ENCODE measurements at regions of chr3 and their contacts with region 1.

Region 1: DNA sequence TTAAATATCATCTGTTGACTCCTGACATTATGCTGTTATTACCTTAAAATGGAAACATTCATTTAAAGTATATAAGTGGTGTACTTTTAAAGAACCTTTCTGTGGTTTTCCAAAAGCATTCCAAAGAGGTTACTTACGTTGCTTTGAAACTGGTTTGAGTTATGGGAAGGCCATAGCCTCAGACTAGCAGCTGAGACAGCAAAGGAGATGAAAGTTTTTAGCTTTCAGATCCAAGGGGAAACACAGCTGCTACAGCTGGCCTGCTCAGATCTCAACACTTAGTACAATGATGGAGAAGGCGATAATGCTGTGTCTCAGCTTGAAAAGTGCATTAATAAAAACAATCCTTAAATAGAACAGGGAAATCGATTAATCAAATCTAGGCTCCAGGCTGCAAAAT is 921.1 kb downstream of the ROBO1 start:
- DNase-seq: no peak
- ATAC-seq: no peak
- H3K4me3 ChIP-seq: no peak overlapping the region
- H3K27ac ChIP-seq: no peak overlapping the region
- H3K4me1 ChIP-seq: no peaks in the 10 kb centered on the region
- H3K27me3 ChIP-seq: no peaks in the 10 kb centered on the region
- CTCF ChIP-seq: no peak
- EP300 ChIP-seq: no peak
- POLR2A ChIP-seq: no peak
- RAD21 ChIP-seq: no peak

Region 2: DNA sequence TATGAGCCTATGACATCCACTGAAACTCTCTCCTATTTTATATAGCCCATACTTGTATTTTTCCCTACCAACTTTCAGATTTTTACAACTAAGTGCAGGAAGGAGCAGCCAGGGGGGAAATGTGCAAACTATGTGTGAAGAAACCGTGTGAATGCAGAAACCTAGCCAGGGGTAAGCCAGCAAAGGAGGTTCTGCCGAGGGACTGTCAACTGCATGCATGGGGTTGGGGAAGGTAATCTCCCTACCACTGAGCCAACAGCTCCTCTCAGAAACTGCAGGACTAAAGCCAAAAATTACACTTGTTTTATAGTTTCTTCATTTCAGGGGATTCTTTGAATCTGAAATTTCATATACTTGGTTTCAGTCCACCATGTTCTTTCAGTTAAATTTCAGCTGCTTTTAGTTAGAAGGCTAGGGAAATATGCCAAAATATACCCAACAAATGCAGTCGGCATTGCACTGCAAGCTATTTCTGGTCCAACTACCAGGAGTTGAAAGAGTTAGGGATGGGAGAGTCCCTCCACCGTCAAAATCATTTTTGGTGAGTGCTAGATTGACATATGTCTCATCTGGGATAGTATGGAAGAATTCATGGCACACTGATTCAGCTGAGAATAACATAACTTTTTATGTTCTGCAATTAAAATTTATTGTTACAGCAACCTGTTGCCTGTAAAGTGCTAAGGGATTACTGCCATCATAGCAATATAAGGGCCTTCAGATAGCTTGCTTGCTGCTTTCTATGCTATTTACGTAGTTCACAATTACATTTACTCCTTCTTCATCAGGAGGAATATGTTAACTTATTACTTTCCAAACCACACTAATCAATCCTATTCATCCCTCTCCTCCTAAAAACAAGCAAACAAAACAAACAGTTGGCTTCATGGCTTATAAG is 16.8 kb after region 1 on chr3:
- CTCF ChIA-PET with region 1: interaction called, 6 read pairs
- POLR2A ChIA-PET with region 1: interaction called, 3 read pairs
- RAD21 ChIA-PET with region 1: interaction called, 7 read pairs
- SMC1A ChIA-PET with region 1: interaction called, 18 read pairs
- in situ Hi-C with region 1: no loop called
- intact Hi-C with region 1: no loop called
- DNase-seq: no peak
- ATAC-seq: peak; percentile 34; the same call in 2 of the 3 replicates
- H3K4me3 ChIP-seq: no peak overlapping the region
- H3K27ac ChIP-seq: no peak overlapping the region
- H3K4me1 ChIP-seq: no peaks in the 10 kb centered on the region
- H3K27me3 ChIP-seq: no peaks in the 10 kb centered on the region
- CTCF ChIP-seq: no peak
- EP300 ChIP-seq: no peak
- POLR2A ChIP-seq: no peak
- RAD21 ChIP-seq: no peak

Region 3: GRCh38 chr3:79632842-79633241 is 786.1 kb after region 1 on chr3:
- CTCF ChIA-PET with region 1: no interaction called
- POLR2A ChIA-PET with region 1: no interaction called
- RAD21 ChIA-PET with region 1: no interaction called
- SMC1A ChIA-PET with region 1: no interaction called
- in situ Hi-C with region 1: no loop called
- intact Hi-C with region 1: no loop called
- DNase-seq: no peak
- ATAC-seq: no peak
- H3K4me3 ChIP-seq: no peak overlapping the region
- H3K27ac ChIP-seq: no peak overlapping the region
- H3K4me1 ChIP-seq: no peaks in the 10 kb centered on the region
- H3K27me3 ChIP-seq: no peaks in the 10 kb centered on the region
- CTCF ChIP-seq: no peak
- EP300 ChIP-seq: no peak
- POLR2A ChIP-seq: no peak
- RAD21 ChIP-seq: no peak

Measured in GM12878 (cell line).